WTC11 (cell line): ENCODE measurements at regions of chr1 and their contacts with region 1.

Region 1: DNA sequence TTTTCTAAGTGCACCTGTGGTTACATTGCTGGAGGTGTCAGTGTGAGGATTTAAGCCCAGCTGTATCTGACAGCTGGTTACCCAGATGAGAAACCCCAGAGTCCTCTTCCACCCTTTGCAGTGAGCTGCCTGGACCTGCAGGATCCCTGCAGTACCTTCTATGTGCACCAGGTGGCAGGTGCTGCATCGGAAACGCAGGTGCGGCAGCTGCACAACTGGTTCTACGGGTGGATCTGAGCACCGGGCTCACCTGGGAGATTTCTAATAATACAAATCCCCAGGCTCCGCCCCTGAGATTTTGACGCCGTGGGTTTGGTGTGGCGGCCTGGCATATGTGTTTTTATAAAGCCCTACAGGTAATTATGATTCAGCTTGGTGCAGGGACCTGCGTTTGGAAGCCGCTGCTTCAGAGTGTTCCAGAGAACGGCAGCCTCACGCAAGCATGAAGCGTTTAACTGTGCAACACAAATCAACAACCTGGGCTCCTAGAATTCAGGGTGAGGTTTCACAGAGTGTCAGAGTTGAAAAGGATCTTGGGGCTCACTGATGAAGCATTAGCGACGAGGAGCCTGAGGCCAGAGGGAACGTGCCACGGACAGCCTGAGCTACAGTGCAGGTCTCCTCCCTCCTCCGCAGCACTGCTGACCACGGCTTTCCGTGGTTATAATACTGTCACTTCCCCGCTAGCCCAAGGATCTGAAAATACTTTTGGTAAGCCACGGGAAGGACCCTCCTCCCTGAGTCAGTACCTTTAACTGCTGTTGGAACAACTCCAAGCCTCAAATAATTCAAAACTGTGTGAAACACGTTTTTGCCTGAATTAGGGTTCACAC is 96.7 kb upstream of the TRABD2B start:
- DNase-seq: peak; percentile 91
- ATAC-seq: peak; percentile 97
- H3K4me3 Mint-ChIP-seq: peak overlapping the region; percentile 40
- H3K27ac Mint-ChIP-seq: no peak overlapping the region
- H3K4me1 Mint-ChIP-seq: peaks cover 4% of the 10 kb centered on the region
- H3K27me3 Mint-ChIP-seq: peaks cover 54% of the 10 kb centered on the region
- CTCF ChIP-seq: peak; percentile 82

Region 2: DNA sequence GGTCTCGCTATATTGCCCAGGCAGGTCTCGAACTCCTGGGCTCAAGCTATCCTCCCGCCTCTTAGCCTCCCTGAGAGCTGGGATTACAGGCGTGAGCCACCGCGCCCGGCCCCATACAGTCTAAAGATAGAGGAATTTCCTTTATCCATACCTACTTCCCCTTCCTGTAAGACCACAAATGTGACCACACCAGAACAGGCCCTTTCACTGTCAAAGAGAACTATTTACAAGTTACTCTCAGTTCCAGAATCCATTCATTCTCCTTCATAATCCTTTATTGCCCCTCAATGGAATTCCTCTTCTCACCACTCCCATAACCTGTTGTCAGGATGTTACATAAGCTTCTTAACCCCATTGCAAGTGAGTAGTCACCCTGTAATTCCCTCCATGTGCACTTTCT is 102.3 kb after region 1 on chr1:
- CTCF ChIA-PET with region 1: interaction called, 11 read pairs
- POLR2A ChIA-PET with region 1: no interaction called
- DNase-seq: no peak
- ATAC-seq: no peak
- H3K4me3 Mint-ChIP-seq: no peak overlapping the region
- H3K27ac Mint-ChIP-seq: no peak overlapping the region
- H3K4me1 Mint-ChIP-seq: no peaks in the 10 kb centered on the region
- H3K27me3 Mint-ChIP-seq: peaks cover 11% of the 10 kb centered on the region
- CTCF ChIP-seq: no peak

Region 3: DNA sequence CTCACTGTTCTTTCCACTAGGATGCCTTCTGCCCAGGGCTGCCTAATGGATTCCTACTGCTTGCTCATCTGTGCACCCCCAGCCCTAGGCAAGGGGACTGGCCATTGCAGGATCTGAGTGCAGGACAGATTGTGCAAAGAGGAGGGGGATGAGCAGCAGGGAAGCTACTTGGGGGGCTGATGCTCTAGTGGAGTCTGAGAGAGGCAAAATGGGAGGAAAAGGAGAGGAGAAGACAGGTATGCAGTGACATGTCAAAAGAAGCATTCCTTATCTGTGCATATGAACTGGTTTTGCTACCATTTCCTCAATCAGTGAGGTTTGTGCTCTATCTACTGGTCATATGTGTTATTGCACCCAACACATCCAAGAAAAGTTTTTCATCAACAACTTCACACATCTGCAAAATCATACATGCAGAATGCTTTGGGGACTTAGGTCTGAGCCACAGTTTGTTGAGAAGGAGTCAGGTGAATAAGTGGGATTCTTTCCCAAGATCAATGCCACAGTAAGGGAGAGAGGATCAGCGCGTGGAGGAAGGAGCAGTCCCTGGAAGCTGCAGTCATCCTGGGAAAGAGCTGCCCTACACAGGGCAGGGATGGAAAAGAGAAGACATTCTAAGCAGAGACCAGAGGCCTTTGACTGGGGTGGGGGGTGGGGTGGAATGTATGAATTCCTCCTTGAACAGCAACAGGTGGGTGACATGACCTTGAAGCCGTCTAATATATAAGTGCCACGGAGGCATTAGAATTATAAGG is 143.0 kb after region 1 on chr1:
- CTCF ChIA-PET with region 1: interaction called, 17 read pairs
- POLR2A ChIA-PET with region 1: no interaction called
- DNase-seq: no peak
- ATAC-seq: peak; percentile 87
- H3K4me3 Mint-ChIP-seq: no peak overlapping the region
- H3K27ac Mint-ChIP-seq: no peak overlapping the region
- H3K4me1 Mint-ChIP-seq: no peaks in the 10 kb centered on the region
- H3K27me3 Mint-ChIP-seq: peaks cover 3% of the 10 kb centered on the region
- CTCF ChIP-seq: peak; percentile 33; the same call in 1 of the 2 replicates

Region 4: DNA sequence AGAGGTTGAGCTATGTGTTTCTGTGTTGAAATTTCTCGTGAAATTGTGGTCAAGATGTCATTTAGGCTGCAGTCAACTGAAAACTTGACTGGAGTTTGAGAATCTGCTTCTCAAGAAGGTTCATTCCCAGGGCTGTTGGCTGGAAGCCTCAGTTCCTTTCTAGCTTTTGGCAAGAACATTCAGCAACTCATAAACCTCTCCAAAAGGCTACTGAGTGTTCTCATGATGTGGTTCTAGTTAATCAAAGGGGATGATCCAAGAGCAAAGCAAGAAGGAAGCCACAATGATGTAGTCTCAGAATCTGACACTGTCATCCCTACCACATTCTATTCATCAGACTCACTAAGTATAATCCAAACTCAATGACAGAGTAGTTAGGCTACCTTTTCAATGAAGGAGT is 311.5 kb after region 1 on chr1:
- CTCF ChIA-PET with region 1: no interaction called
- POLR2A ChIA-PET with region 1: no interaction called
- DNase-seq: no peak
- ATAC-seq: no peak
- H3K4me3 Mint-ChIP-seq: no peak overlapping the region
- H3K27ac Mint-ChIP-seq: no peak overlapping the region
- H3K4me1 Mint-ChIP-seq: peaks cover 3% of the 10 kb centered on the region; the same call in 1 of the 2 replicates
- H3K27me3 Mint-ChIP-seq: no peaks in the 10 kb centered on the region
- CTCF ChIP-seq: no peak